CD8-positive, alpha-beta T cell (primary cell): ENCODE measurements at regions of chr14 and their contacts with region 1.

Region 1: GRCh38 chr14:81464247-81465002 is 64.3 kb upstream of the STON2 start:
- DNase-seq: peak; percentile 26 to 84 (median 58)
- ATAC-seq: peak; percentile 81
- H3K4me3 ChIP-seq: peak overlapping the region; percentile 63 to 68
- H3K4me3 Mint-ChIP-seq: peak overlapping the region; percentile 86
- H3K27ac ChIP-seq: peak overlapping the region; percentile 55 to 86
- H3K27ac Mint-ChIP-seq: peak overlapping the region; percentile 87
- H3K4me1 ChIP-seq: no peaks in the 10 kb centered on the region
- H3K4me1 Mint-ChIP-seq: peaks cover 10% of the 10 kb centered on the region
- H3K27me3 ChIP-seq: no peaks in the 10 kb centered on the region
- H3K27me3 Mint-ChIP-seq: no peaks in the 10 kb centered on the region
- CTCF ChIP-seq: peak; percentile 95

Region 2: GRCh38 chr14:80017795-80018194 is 1446.6 kb before region 1 on chr14:
- CTCF ChIA-PET with region 1: no interaction called
- POLR2A ChIA-PET with region 1: no interaction called
- intact Hi-C with region 1: no loop called
- DNase-seq: no peak
- ATAC-seq: no peak
- H3K4me3 ChIP-seq: no peak overlapping the region
- H3K4me3 Mint-ChIP-seq: no peak overlapping the region
- H3K27ac ChIP-seq: no peak overlapping the region
- H3K27ac Mint-ChIP-seq: no peak overlapping the region
- H3K4me1 ChIP-seq: no peaks in the 10 kb centered on the region
- H3K4me1 Mint-ChIP-seq: no peaks in the 10 kb centered on the region
- H3K27me3 ChIP-seq: no peaks in the 10 kb centered on the region
- H3K27me3 Mint-ChIP-seq: no peaks in the 10 kb centered on the region
- CTCF ChIP-seq: no peak

Region 3: GRCh38 chr14:80996049-80996901 is 468.1 kb before region 1 on chr14:
- CTCF ChIA-PET with region 1: interaction called, 6 read pairs
- POLR2A ChIA-PET with region 1: no interaction called
- intact Hi-C with region 1: loop called (anchors 1 to 2 kb)
- DNase-seq: peak in 3 of 9 experiments; percentile 26 to 61 (median 51)
- ATAC-seq: peak; percentile 54
- H3K4me3 ChIP-seq: no peak overlapping the region
- H3K4me3 Mint-ChIP-seq: no peak overlapping the region
- H3K27ac ChIP-seq: no peak overlapping the region
- H3K27ac Mint-ChIP-seq: no peak overlapping the region
- H3K4me1 ChIP-seq: no peaks in the 10 kb centered on the region
- H3K4me1 Mint-ChIP-seq: no peaks in the 10 kb centered on the region
- H3K27me3 ChIP-seq: no peaks in the 10 kb centered on the region
- H3K27me3 Mint-ChIP-seq: peaks cover 9% of the 10 kb centered on the region
- CTCF ChIP-seq: peak; percentile 59

Region 4: DNA sequence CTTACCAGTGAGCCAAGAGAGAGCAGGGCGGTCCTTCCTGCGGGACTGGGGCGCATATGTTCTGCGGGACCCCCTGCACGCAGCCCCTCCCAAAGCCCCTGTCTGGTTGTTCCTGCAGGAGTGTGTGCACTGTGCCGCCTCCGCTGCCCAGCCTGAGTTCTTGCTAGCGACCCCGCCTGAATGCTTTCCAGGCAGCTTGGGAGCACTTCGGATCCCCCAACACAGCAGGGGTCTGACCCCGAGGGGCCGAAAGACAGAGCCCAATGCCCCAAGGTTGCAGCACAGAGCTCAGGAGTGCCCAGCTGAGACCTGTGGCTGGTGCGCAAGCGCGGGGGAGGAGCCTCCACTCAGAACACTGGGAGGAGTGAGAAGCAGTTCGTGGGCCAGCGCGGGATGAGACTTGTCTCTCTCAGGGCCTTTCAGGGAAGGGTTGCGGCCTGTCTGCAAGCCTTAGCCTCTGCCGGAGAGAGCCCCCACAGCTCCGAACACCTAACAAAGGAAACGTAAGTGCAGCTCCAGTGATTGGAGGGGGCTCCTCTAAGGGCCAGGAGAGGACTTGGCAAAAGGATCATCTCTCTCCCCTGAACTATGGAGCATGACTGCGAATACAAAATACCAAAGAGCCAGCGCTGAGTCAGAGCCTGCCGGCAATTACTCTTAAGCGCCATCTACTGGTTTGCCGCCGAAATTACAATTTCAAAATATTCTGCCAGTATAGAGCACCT is 294.2 kb before region 1 on chr14:
- CTCF ChIA-PET with region 1: interaction called, 7 read pairs
- POLR2A ChIA-PET with region 1: no interaction called
- intact Hi-C with region 1: loop called in 1 of 2 experiments (anchors 5 kb)
- DNase-seq: peak; percentile 72 to 92 (median 89)
- ATAC-seq: peak; percentile 97
- H3K4me3 ChIP-seq: peak overlapping the region; percentile 67 to 70
- H3K4me3 Mint-ChIP-seq: peak overlapping the region; percentile 94
- H3K27ac ChIP-seq: peak overlapping the region; percentile 53 to 81
- H3K27ac Mint-ChIP-seq: peak overlapping the region; percentile 97
- H3K4me1 ChIP-seq: peaks cover 12% of the 10 kb centered on the region
- H3K4me1 Mint-ChIP-seq: peaks cover 20% of the 10 kb centered on the region
- H3K27me3 ChIP-seq: no peaks in the 10 kb centered on the region
- H3K27me3 Mint-ChIP-seq: no peaks in the 10 kb centered on the region
- CTCF ChIP-seq: peak; percentile 77

Region 5: GRCh38 chr14:81269100-81269978 is 195.1 kb before region 1 on chr14:
- CTCF ChIA-PET with region 1: interaction called, 74 read pairs
- POLR2A ChIA-PET with region 1: no interaction called
- intact Hi-C with region 1: loop called in 1 of 2 experiments (anchors 1 kb)
- DNase-seq: peak in 3 of 9 experiments; percentile 7 to 60 (median 52)
- ATAC-seq: peak; percentile 52
- H3K4me3 ChIP-seq: no peak overlapping the region
- H3K4me3 Mint-ChIP-seq: no peak overlapping the region
- H3K27ac ChIP-seq: no peak overlapping the region
- H3K27ac Mint-ChIP-seq: no peak overlapping the region
- H3K4me1 ChIP-seq: no peaks in the 10 kb centered on the region
- H3K4me1 Mint-ChIP-seq: peaks cover 2% of the 10 kb centered on the region
- H3K27me3 ChIP-seq: no peaks in the 10 kb centered on the region
- H3K27me3 Mint-ChIP-seq: peaks cover 17% of the 10 kb centered on the region
- CTCF ChIP-seq: peak; percentile 63

Region 6: GRCh38 chr14:81453166-81453766 is 11.2 kb before region 1 on chr14:
- CTCF ChIA-PET with region 1: interaction called, 44 read pairs
- POLR2A ChIA-PET with region 1: no interaction called
- intact Hi-C with region 1: no loop called
- DNase-seq: peak in 7 of 9 experiments; percentile 36 to 69 (median 58)
- ATAC-seq: peak; percentile 86
- H3K4me3 ChIP-seq: no peak overlapping the region
- H3K4me3 Mint-ChIP-seq: no peak overlapping the region
- H3K27ac ChIP-seq: no peak overlapping the region
- H3K27ac Mint-ChIP-seq: no peak overlapping the region
- H3K4me1 ChIP-seq: no peaks in the 10 kb centered on the region
- H3K4me1 Mint-ChIP-seq: peaks cover 3% of the 10 kb centered on the region
- H3K27me3 ChIP-seq: no peaks in the 10 kb centered on the region
- H3K27me3 Mint-ChIP-seq: peaks cover 4% of the 10 kb centered on the region
- CTCF ChIP-seq: peak; percentile 89

Region 7: DNA sequence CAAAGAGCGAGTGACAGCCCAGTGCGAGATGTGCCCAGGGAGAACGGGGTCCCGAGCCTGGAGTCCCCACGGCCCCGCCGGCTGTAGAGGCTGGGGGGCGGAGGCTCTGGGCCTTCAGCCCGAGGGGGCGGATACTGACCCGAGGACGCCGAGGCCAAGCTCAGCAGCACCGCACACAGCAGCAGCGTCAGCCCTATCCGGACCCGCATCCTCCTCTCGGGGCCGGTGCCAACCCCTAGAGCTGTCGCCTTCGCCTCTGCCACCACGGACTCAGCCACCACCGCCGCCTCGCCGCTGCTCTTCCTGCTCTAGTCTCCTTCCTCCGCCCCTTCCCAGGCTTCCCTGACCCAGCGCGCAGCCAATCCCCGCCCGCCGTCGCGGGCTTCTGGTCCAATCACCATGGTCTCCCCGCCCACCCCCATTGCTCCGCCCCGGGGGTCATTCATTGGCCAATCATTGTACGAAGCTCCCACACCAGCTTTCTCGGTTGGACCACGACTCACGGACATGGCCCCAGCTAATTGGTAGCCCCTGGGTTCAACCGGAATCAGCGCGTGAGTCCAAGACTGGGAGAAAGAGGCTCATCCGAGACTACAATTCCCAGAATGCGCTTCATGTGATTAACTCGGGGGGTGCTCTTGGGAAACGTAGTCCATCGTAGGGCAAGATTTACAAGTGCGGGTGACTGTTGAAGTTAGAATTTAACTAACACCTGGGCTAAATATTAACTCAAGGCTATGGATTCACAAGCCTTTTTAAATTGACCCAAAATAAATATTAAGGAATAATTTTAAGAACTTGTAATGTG is 69.3 kb after region 1 on chr14 and contains the start of gene SEL1L:
- CTCF ChIA-PET with region 1: interaction called, 3 read pairs
- POLR2A ChIA-PET with region 1: no interaction called
- intact Hi-C with region 1: loop called in 1 of 2 experiments (anchors 2 kb)
- DNase-seq: peak; percentile 99 to 100 (median 99)
- ATAC-seq: peak; percentile 95
- H3K4me3 ChIP-seq: peak within 1 kb of the TSS; percentile 84 to 88
- H3K4me3 Mint-ChIP-seq: peak within 1 kb of the TSS; percentile 99
- H3K27ac ChIP-seq: peak within 1 kb of the TSS; percentile 70
- H3K27ac Mint-ChIP-seq: peak within 1 kb of the TSS; percentile 91
- H3K4me1 ChIP-seq: peaks cover 29% of the 10 kb centered on the region
- H3K4me1 Mint-ChIP-seq: peaks cover 65% of the 10 kb centered on the region
- H3K27me3 ChIP-seq: no peaks in the 10 kb centered on the region
- H3K27me3 Mint-ChIP-seq: no peaks in the 10 kb centered on the region
- CTCF ChIP-seq: no peak
- total RNA-seq, gene SEL1L: 41.2 to 46.5 TPM

Region 8: GRCh38 chr14:81561084-81561775 is 96.8 kb after region 1 on chr14:
- CTCF ChIA-PET with region 1: no interaction called
- POLR2A ChIA-PET with region 1: no interaction called
- intact Hi-C with region 1: no loop called
- DNase-seq: no peak
- ATAC-seq: no peak
- H3K4me3 ChIP-seq: no peak overlapping the region
- H3K4me3 Mint-ChIP-seq: no peak overlapping the region
- H3K27ac ChIP-seq: no peak overlapping the region
- H3K27ac Mint-ChIP-seq: no peak overlapping the region
- H3K4me1 ChIP-seq: no peaks in the 10 kb centered on the region
- H3K4me1 Mint-ChIP-seq: no peaks in the 10 kb centered on the region
- H3K27me3 ChIP-seq: no peaks in the 10 kb centered on the region
- H3K27me3 Mint-ChIP-seq: peaks cover 3% of the 10 kb centered on the region
- CTCF ChIP-seq: no peak